MCF 10A (cell line): ENCODE measurements at regions of chr5 and their contacts with region 1.

Region 1: DNA sequence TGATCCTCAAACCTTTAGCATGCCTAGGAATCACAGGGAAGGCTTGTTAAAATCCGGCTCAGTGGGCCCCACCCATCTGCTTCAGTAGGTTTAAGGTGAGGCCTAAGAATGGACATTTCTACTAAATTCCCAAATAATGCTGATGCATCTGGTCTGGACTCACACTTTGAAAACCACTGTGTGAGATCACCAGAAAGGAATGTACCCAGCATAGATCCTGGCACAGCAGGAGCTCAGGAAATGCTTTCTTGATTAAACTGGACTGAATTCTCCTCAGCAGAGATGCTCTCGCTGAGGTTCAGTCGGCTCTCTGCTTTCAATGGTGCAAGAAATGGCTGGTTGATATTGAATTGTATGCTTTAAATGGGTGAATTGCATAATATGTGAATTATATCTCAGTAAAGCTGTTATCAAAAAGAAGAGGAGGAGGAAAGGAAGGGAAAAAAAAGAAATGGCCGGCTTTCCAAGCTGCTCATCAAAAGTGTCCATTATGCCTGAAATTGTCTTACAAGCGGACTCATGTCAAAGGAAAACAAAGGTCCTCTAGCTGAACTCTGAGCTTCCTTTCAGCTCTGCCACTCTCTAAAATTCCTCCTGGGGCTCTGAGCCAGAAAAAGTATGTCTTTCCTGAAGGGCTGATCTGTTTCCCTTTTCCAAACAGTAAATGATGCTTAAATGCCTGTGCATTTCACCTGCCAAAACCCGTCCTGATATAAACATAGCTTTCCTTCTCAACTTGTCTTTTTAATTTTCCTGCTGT is 77.6 kb upstream of the SAP30L start:
- DNase-seq: peak; percentile 98
- H3K4me3 Mint-ChIP-seq: peak overlapping the region; percentile 42
- H3K27ac Mint-ChIP-seq: peak overlapping the region; percentile 84
- H3K4me1 Mint-ChIP-seq: peaks cover 63% of the 10 kb centered on the region
- H3K27me3 Mint-ChIP-seq: no peaks in the 10 kb centered on the region
- CTCF ChIP-seq: no peak

Region 2: GRCh38 chr5:154214371-154215106 is 153.7 kb before region 1 on chr5:
- CTCF ChIA-PET with region 1: interaction called, 3 read pairs
- POLR2A ChIA-PET with region 1: interaction called, 12 read pairs
- intact Hi-C with region 1: no loop called
- DNase-seq: peak; percentile 92
- H3K4me3 Mint-ChIP-seq: peak overlapping the region; percentile 63
- H3K27ac Mint-ChIP-seq: peak overlapping the region; percentile 85
- H3K4me1 Mint-ChIP-seq: peaks cover 27% of the 10 kb centered on the region
- H3K27me3 Mint-ChIP-seq: no peaks in the 10 kb centered on the region
- CTCF ChIP-seq: no peak

Region 3: DNA sequence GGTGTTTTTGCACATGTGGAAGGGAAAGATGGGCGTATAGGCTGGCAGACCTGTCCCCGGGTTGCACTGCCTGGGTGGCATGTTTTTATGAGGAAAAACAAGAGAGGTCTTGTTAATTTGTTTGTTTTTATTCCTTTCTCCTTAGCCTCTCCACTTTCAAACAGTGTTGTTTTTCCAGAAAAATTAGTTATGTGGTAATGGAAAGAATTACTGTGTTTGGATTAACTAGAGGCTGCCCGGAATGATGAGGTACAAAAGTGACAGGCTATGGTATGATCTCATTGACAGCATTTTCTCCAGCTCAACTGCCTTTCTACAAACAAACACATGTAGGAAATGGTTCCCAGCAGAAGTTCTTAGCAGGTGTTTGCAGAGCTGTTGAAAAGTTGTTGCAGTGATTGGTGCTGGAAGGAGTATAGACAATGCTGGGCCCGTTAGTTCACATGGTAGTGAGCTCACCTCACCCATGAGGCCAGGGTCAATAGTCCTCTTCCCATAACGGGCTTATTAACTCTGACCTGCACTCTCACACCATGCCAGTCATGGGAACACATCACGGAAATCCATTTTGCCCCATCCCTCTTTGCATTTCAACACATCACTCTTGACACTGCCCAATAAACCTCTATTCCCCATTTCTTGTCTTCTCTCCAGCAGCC is 33.7 kb before region 1 on chr5:
- CTCF ChIA-PET with region 1: no interaction called
- POLR2A ChIA-PET with region 1: no interaction called
- intact Hi-C with region 1: no loop called
- DNase-seq: no peak
- H3K4me3 Mint-ChIP-seq: no peak overlapping the region
- H3K27ac Mint-ChIP-seq: no peak overlapping the region
- H3K4me1 Mint-ChIP-seq: no peaks in the 10 kb centered on the region
- H3K27me3 Mint-ChIP-seq: no peaks in the 10 kb centered on the region
- CTCF ChIP-seq: no peak

Region 4: GRCh38 chr5:154384480-154385235 is 16.4 kb after region 1 on chr5:
- CTCF ChIA-PET with region 1: interaction called, 8 read pairs
- POLR2A ChIA-PET with region 1: interaction called, 11 read pairs
- intact Hi-C with region 1: no loop called
- DNase-seq: no peak
- H3K4me3 Mint-ChIP-seq: no peak overlapping the region
- H3K27ac Mint-ChIP-seq: no peak overlapping the region
- H3K4me1 Mint-ChIP-seq: no peaks in the 10 kb centered on the region
- H3K27me3 Mint-ChIP-seq: no peaks in the 10 kb centered on the region
- CTCF ChIP-seq: no peak